AG04449 (cell line): ENCODE measurements at regions of chr11 and their contacts with region 1.

Region 1: GRCh38 chr11:120511116-120511819 is at the start of gene GRIK4:
- DNase-seq: no peak
- H3K4me3 ChIP-seq: peak within 1 kb of the TSS; percentile 49
- CTCF ChIP-seq: peak; percentile 93

Region 2: GRCh38 chr11:120215634-120216033 is 295.6 kb before region 1 on chr11:
- CTCF ChIA-PET with region 1: no interaction called
- POLR2A ChIA-PET with region 1: no interaction called
- DNase-seq: no peak
- H3K4me3 ChIP-seq: no peak overlapping the region
- CTCF ChIP-seq: no peak

Region 3: DNA sequence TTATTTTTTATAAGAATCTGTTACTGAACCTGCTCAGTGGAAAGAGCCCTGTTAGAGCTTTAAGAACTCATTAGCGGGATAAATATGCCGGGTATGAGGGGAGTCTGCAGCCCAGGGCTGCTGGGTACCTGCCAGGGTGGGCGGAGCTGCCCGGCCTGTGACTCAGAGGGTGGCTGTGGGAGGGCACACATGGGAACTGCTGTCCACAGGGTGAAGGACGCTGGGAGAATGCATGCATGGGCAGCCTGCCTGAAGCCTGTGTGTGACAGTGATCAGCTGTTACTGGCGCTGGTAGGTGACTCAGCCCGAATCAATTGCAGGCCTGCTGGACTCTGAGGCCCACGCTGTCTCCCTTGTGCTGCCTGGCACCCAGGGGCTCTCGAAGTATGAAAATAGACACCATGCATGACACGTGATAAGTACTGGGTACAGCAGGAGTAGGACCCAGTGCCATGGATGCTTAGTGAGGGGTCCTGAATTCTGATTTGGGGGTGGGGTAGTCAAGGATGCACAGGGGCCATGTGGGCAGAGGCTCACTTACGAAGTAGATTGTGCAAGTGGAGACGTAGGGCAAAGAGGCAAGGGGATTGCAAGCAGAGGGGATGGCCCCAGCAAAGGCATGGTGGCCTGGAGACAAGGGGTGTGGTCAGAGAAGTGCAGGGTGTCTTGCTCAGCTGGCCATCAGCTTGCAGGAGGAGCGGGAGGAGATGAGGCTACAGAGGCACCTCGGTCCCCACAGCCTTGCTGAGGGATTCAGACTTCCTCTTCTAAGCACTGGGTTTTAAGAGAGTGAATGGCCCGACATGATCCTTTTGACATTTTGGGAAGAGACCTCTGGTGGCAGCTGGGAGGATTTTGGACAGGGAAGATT is 36.8 kb after region 1 on chr11:
- CTCF ChIA-PET with region 1: interaction called, 10 read pairs
- POLR2A ChIA-PET with region 1: no interaction called
- DNase-seq: peak; percentile 91
- H3K4me3 ChIP-seq: no peak overlapping the region
- CTCF ChIP-seq: peak; percentile 14

Region 4: DNA sequence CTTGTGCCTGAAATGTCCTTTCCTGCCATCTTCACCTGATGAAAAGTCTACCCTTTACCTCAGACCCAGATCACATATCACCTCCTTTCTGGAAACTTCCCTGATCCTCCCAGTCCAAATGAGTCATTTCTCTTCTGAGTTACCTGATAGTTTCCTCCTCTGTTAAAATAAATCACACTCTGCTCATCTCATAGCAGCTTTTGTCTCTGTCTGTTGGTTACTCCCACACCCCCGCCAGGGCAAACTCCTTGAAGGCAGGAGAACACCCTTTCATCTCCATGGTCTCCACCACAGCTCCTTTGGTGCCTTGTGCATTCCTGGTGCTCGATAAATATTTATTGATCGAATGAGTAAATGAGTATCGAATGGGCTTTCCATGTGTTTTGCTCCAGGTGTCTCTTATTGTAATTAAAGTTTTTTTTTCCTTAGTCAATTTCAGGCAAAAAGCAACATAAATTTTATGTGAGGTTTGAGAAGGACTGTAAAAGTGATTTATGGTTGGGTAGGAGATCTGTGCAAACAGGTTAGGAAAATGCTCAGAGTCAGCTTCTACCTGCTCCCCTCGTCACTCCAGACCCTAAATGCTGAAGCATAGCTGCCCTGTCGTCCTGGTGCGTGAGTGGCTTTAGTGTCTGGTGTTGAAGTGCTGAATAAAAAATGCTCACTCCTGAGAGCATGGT is 178.5 kb after region 1 on chr11:
- CTCF ChIA-PET with region 1: interaction called, 249 read pairs
- POLR2A ChIA-PET with region 1: no interaction called
- DNase-seq: no peak
- H3K4me3 ChIP-seq: no peak overlapping the region
- CTCF ChIP-seq: no peak

Region 5: GRCh38 chr11:120952461-120953434 is 441.5 kb after region 1 on chr11:
- CTCF ChIA-PET with region 1: interaction called, 11 read pairs
- POLR2A ChIA-PET with region 1: no interaction called
- DNase-seq: peak; percentile 7
- H3K4me3 ChIP-seq: no peak overlapping the region
- CTCF ChIP-seq: peak; percentile 84